Activated CD4-positive, alpha-beta memory T cell treated with anti-CD3 and anti-CD28 coated beads, Interleukin-2, amount 10 ng/mL, durations not matched to agents 7 days and 5 days (primary cell): ENCODE measurements at regions of chr19 and their contacts with region 1.

Region 1: GRCh38 chr19:41541990-41542584 is 33.9 kb upstream of the CEACAM21 start:
- DNase-seq: peak; percentile 86
- H3K4me3 Mint-ChIP-seq: peak overlapping the region; percentile 18
- H3K27ac Mint-ChIP-seq: peak overlapping the region; percentile 8
- H3K4me1 Mint-ChIP-seq: peaks cover 58% of the 10 kb centered on the region
- H3K27me3 Mint-ChIP-seq: no peaks in the 10 kb centered on the region

Region 2: DNA sequence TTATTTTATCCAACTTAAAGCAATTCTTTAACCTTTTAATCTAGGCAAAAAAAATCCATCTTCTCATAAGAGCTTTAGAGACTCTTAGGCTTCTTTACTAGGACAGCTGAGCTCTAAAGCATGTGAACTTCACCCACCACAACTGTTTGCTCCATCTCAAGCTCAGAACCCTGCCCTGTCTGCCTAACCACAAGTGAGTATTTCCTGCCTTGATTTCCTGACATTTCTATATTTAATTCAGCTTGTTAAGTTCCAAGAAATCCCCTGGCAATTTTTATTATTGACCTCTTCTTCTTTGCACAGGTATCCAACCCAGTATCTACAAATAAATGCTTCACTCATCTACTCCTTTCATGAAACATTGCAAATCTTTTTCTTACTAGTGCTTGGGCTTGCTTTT is 12.8 kb after region 1 on chr19:
- CTCF ChIA-PET with region 1: interaction called, 13 read pairs
- POLR2A ChIA-PET with region 1: interaction called, 173 read pairs
- DNase-seq: peak; percentile 64
- H3K4me3 Mint-ChIP-seq: peak overlapping the region; percentile 58
- H3K27ac Mint-ChIP-seq: peak overlapping the region; percentile 99
- H3K4me1 Mint-ChIP-seq: peaks cover 68% of the 10 kb centered on the region
- H3K27me3 Mint-ChIP-seq: no peaks in the 10 kb centered on the region

Region 3: DNA sequence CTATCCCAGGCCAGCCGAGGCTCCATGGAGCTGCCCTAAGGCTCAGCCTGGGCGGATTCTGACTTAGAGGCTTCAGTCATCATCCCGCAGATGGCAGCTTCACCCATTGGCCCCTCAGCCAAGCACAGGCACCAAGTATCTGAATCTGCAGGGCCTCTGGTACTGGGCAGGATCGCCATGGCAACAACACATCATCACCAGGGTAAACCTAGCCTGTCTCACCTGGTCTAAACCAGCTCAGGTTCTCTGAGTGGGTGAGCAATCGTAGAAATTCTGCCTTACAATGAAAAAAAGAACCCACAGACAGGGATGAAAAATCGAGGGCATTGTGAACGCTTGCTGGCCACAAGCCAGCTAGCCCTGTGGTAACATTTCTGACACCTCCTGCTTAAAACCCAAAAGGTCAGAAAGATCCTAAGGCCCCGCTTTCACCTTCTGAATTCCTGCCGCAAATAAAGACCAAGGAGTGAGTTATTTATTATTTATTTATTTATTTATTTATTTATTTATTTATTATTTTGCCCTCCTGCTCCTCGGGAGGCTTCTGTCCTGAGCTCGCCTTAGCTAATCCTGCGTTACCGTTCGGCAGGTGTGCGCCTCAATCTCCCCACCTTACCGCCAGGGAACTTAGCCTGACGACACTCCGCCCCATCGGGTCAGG is 21.9 kb after region 1 on chr19:
- CTCF ChIA-PET with region 1: interaction called, 193 read pairs
- POLR2A ChIA-PET with region 1: interaction called, 173 read pairs
- DNase-seq: peak; percentile 46
- H3K4me3 Mint-ChIP-seq: no peak overlapping the region
- H3K27ac Mint-ChIP-seq: no peak overlapping the region
- H3K4me1 Mint-ChIP-seq: peaks cover 64% of the 10 kb centered on the region
- H3K27me3 Mint-ChIP-seq: no peaks in the 10 kb centered on the region

Region 4: GRCh38 chr19:41597600-41598041 is 55.5 kb after region 1 on chr19:
- CTCF ChIA-PET with region 1: interaction called, 11 read pairs
- POLR2A ChIA-PET with region 1: no interaction called
- DNase-seq: peak; percentile 80
- H3K4me3 Mint-ChIP-seq: no peak overlapping the region
- H3K27ac Mint-ChIP-seq: no peak overlapping the region
- H3K4me1 Mint-ChIP-seq: peaks cover 15% of the 10 kb centered on the region
- H3K27me3 Mint-ChIP-seq: peaks cover 27% of the 10 kb centered on the region